Heart left ventricle (tissue), 16 donors: ENCODE measurements at regions of chr18 and their contacts with region 1.

Region 1: DNA sequence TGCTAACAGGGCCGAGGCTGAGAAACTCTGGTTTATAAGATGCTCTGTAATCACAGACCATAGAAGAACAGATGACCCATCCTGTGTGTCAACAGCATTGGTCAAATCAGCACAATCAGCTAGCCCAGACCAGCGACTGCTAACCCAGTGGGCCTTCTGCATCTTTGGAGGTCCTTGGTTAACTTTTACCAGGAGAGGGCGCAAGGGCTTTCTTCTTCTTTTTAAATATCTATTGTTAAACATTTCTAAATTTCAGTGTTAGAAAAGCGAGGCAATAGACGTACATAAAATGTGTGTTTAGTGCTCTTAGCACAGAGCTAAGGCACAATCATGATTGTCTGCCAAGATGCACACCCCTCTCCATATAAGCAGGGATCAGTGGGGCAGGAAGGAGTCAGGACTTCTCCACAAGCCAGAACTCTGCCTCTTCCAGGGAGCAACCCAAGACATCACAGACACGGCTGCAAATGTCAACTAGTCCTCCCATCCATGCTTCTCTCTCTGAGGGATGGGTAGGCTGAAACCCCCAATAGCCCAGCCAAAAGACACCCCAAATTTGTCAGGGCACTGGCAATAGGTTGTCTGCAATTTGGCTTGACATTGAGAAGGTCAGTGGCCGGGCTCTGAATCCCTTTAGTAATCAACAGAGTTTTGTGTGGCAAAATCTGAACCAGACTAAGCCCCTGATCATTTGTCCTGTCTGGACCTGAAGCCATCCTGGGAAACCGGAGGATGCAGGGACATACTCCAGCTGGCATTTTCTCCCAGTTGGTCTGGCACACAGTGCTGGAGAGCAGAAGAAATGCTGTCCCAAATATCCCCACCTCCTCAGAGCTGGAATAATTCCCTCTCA is 188.2 kb downstream of the BCL2 start:
- DNase-seq: peak in 2 of 5 donors; percentile 50 to 53
- ATAC-seq: peak; percentile 54 to 68 (median 58)
- H3K4me3 ChIP-seq: no peak overlapping the region
- H3K27ac ChIP-seq: peak overlapping the region in 1 of 12 donors; percentile 36
- H3K4me1 ChIP-seq: peaks cover 0 to 15% (median 8%) of the 10 kb centered on the region in 12 donors
- H3K27me3 ChIP-seq: no peaks in the 10 kb centered on the region
- CTCF ChIP-seq: peak; percentile 51 to 82 (median 72)
- POLR2A ChIP-seq: no peak

Region 2: DNA sequence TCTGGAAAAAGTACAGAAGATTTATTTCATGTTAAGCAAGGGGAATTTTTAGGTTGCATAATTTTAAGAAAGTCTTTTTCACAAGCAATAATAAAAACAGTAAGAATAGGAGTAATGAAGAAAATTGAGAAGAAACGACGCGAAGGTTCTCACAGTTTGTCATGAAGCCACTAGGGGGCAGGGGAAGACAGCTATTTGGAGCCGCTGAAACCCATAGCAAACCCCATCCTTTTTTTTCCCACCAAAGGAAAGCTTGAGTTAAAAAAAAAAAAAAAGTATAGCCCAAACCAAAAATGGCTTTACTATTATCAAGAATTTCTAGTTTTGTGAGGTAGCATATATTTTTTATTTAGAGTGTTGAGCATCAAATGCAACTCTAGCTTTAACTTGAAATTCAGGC is 115.1 kb before region 1 on chr18:
- intact Hi-C with region 1: loop called in 5 of 10 experiments (anchors 5 to 10 kb)
- DNase-seq: peak in 2 of 5 donors; percentile 38 to 42
- ATAC-seq: peak in 3 of 4 donors; percentile 58 to 72 (median 65)
- H3K4me3 ChIP-seq: no peak overlapping the region
- H3K27ac ChIP-seq: no peak overlapping the region
- H3K4me1 ChIP-seq: no peaks in the 10 kb centered on the region
- H3K27me3 ChIP-seq: peaks cover 0 to 9% (median 0%) of the 10 kb centered on the region in 9 donors
- CTCF ChIP-seq: peak; percentile 65 to 89 (median 82)
- POLR2A ChIP-seq: no peak

Region 3: GRCh38 chr18:63054901-63055584 is 76.3 kb before region 1 on chr18:
- intact Hi-C with region 1: no loop called
- DNase-seq: no peak
- ATAC-seq: no peak
- H3K4me3 ChIP-seq: no peak overlapping the region
- H3K27ac ChIP-seq: no peak overlapping the region
- H3K4me1 ChIP-seq: no peaks in the 10 kb centered on the region
- H3K27me3 ChIP-seq: peaks cover 0 to 3% (median 0%) of the 10 kb centered on the region in 9 donors
- CTCF ChIP-seq: no peak
- POLR2A ChIP-seq: no peak

Region 4: DNA sequence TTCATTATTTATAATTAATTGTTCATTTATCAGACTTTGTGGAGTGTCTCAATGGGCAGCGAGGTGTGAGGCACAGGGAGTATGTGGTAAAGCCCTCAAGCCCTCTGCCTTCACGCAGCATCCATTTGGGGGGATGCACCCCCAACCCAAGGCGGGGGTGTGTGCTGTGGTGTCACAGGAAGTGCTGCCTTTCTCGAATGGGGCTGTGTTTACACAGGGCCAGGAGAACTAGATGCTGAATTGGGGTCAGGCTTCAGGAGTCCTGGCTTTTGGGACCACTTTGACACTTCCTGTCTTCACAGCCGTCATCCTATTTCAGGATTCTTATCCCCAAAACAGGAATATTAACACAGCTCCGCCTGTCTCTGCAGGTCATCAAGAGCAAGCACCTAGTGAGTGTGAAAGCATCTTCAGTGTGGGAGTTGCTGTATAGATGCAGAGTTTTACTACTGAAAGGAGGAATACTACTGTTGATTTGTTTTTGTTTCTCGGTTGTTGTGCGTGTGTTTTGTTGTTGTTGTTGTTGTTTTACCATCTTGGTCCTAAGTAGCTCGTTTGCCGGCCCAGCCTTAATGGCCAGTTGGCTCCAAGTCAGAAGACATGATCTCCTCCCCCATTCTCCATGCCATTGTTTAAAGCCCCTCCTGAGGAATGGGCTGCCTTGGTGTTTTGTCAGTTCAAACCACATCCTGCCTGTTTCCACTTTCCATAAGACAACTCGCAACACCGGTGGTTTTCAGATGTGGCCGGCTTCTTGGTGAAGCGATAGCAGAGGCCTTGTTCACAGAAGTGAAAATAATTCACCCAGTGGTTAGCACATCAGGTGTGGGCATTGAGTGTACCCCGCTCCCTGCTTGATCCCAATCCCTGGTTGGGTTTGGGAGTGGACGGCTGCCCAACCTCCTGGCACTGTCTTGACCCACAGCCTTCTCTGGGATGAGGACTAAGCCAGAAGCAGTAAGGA is 33.0 kb before region 1 on chr18:
- intact Hi-C with region 1: no loop called
- DNase-seq: no peak
- ATAC-seq: no peak
- H3K4me3 ChIP-seq: no peak overlapping the region
- H3K27ac ChIP-seq: no peak overlapping the region
- H3K4me1 ChIP-seq: peaks cover 0 to 31% (median 10%) of the 10 kb centered on the region in 12 donors
- H3K27me3 ChIP-seq: no peaks in the 10 kb centered on the region
- CTCF ChIP-seq: no peak
- POLR2A ChIP-seq: no peak

Region 5: GRCh38 chr18:63155169-63155852 is 24.0 kb after region 1 on chr18:
- intact Hi-C with region 1: loop called in 2 of 10 experiments (anchors 2 kb)
- DNase-seq: peak; percentile 58 to 74 (median 71)
- ATAC-seq: peak; percentile 64 to 91 (median 85)
- H3K4me3 ChIP-seq: peak overlapping the region in 9 of 12 donors; percentile 16 to 47 (median 40)
- H3K27ac ChIP-seq: peak overlapping the region in 2 of 12 donors; percentile 26 to 72
- H3K4me1 ChIP-seq: peaks cover 0 to 49% (median 6%) of the 10 kb centered on the region in 12 donors
- H3K27me3 ChIP-seq: no peaks in the 10 kb centered on the region
- CTCF ChIP-seq: peak; percentile 64 to 86 (median 74)
- POLR2A ChIP-seq: no peak

Region 6: DNA sequence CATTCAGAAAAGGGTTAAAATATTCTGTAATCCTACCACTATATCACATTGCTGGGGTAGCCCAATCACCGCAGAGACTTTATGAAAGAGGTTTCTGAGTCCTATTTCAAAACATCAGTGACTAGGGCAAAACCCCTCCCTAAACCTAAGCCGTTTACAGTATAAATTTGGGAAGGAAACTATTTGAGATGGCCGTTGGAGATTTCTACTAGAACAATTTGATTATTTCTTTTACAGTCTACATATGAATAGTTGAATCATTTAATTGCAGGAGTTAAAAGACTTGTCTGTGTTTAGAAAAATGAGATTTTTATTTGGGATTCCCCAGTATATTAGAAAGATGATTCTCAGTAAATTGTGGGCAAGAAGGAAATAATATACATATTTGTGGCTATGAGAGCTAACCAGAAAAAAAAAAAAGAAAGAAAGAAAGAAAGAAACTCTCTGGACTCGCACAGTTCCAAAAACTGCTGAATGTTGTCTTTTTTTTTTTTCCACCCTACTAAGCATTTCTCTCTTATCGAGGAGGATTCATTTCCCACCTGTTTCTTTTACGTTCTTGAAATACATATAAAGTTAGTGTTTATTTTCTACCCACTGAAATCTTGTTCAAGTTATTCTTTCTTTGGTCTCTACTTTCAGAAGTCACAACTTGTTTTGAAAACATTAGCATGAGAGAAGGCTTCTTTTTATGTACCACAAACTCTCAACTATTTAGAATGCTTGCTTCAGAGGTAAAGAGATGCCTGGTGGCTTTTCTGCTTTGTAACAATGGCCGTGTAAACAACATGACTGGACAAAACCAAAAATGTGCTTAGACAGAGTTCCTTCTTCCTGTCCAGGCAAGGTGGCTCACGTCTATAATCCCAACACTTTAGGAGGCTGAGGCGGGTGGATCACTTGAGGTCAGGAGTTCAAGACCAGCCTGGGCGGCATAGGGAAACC is 122.4 kb after region 1 on chr18:
- intact Hi-C with region 1: loop called in 1 of 10 experiments (anchors 10 kb)
- DNase-seq: no peak
- ATAC-seq: peak in 1 of 4 donors; percentile 49
- H3K4me3 ChIP-seq: peak overlapping the region in 1 of 12 donors; percentile 5
- H3K27ac ChIP-seq: peak overlapping the region in 1 of 12 donors; percentile 22
- H3K4me1 ChIP-seq: peaks cover 0 to 27% (median 0%) of the 10 kb centered on the region in 12 donors
- H3K27me3 ChIP-seq: no peaks in the 10 kb centered on the region
- CTCF ChIP-seq: no peak
- POLR2A ChIP-seq: no peak

Region 7: GRCh38 chr18:63320046-63320689 is 188.8 kb after region 1 on chr18:
- intact Hi-C with region 1: loop called (anchors 1 to 5 kb)
- DNase-seq: peak; percentile 86 to 91 (median 89)
- ATAC-seq: peak; percentile 81 to 90 (median 84)
- H3K4me3 ChIP-seq: peak overlapping the region in 11 of 12 donors; percentile 65 to 92 (median 73)
- H3K27ac ChIP-seq: peak overlapping the region in 11 of 12 donors; percentile 52 to 89 (median 83)
- H3K4me1 ChIP-seq: peaks cover 0 to 50% (median 26%) of the 10 kb centered on the region in 12 donors
- H3K27me3 ChIP-seq: peaks cover 0 to 11% (median 0%) of the 10 kb centered on the region in 9 donors
- CTCF ChIP-seq: peak in 1 of 12 donors; percentile 24
- POLR2A ChIP-seq: no peak

Region 8: GRCh38 chr18:63422087-63422809 is 290.9 kb after region 1 on chr18 and contains the start of gene VPS4B:
- intact Hi-C with region 1: loop called in 2 of 10 experiments (anchors 10 kb)
- DNase-seq: peak; percentile 99 to 100 (median 100)
- ATAC-seq: peak; percentile 99 to 100 (median 99)
- H3K4me3 ChIP-seq: peak within 1 kb of the TSS; percentile 54 to 99 (median 84)
- H3K27ac ChIP-seq: peak within 1 kb of the TSS; percentile 86 to 98 (median 96)
- H3K4me1 ChIP-seq: peaks cover 0 to 41% (median 19%) of the 10 kb centered on the region in 12 donors
- H3K27me3 ChIP-seq: no peaks in the 10 kb centered on the region
- CTCF ChIP-seq: no peak
- POLR2A ChIP-seq: peak; percentile 37 to 88
- total RNA-seq, gene VPS4B: 13.5 to 40.0 (median 19.9) TPM